A673 (cell line): ENCODE measurements at regions of chr22 and their contacts with region 1.

Region 1: DNA sequence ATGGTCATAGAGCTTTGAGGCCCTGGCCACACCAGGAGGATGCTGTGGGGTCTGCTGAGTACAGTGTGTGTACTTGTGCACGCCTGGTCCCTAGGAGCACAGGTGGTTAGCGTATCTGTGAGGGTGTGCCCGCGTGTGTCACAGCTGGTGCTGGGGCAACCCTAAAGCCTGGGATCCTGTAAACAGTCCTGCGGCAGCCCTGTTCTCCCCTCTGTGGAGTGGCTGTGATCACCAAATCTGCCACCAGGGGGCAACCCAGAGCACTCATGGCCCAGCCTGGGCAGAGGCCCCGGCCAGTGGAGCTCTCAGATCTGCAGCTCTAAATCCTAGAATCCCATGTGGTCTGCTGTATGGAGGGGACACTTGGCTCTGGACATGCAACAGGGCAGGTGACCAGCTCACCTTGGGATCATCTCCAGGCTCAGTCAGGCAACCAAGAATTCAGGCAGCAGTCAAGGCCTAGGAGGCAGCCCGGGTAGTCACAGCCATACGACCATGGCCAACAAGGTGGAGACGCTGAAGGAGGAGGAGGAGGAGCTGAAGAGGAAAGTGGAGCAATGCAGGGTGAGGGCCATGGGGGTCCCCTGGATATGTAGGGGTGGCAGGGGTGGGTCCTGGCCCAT is 3.9 kb downstream of the SH3BP1 start:
- DNase-seq: peak; percentile 86
- H3K4me3 ChIP-seq: no peak overlapping the region
- H3K27ac ChIP-seq: no peak overlapping the region
- H3K4me1 ChIP-seq: peaks cover 26% of the 10 kb centered on the region
- H3K27me3 ChIP-seq: no peaks in the 10 kb centered on the region
- CTCF ChIP-seq: peak; percentile 93

Region 2: DNA sequence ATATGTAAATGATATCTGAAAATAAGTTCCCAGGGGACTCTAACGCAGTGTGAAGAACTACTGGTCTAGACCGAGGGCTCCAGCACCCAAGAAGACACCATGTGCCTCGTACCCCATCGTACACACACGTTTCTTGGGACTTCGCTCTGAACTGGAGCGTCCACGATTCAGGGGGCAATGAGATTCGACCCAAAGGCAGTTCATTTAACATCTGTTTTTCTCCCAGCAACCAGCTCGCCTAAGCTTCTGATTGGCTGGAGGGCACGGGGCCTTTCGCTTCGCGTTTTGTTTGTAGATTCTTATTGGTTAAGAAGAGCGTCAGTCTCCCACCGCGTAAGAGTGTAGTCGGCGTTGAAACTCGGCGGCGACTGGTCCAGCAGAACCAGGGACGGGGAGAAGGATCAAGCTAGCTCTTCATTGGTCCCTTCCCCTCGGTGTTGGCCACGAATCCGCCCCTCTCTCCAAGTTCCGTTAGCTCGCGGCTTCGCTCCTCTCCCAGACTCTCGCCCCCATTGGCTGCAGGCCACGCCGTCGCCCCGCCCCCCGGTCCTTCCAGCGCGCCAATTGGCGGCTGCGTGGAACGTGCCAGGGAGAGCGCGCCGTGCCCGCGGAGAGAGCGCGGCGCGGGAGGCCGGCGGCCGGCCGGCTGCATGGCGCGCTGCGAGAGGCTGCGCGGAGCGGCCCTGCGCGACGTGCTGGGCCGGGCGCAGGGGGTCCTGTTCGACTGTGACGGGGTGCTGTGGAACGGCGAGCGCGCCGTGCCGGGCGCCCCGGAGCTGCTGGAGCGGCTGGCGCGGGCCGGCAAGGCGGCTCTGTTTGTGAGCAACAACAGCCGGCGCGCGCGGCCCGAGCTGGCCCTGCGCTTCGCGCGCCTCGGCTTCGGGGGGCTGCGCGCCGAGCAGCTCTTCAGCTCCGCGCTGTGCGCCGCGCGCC is 15.1 kb after region 1 on chr22 and contains the start of gene PDXP:
- CTCF ChIA-PET with region 1: interaction called, 39 read pairs
- POLR2A ChIA-PET with region 1: interaction called, 9 read pairs
- intact Hi-C with region 1: no loop called
- DNase-seq: peak; percentile 100
- H3K4me3 ChIP-seq: peak within 1 kb of the TSS; percentile 85
- H3K27ac ChIP-seq: peak within 1 kb of the TSS; percentile 51
- H3K4me1 ChIP-seq: peaks cover 21% of the 10 kb centered on the region
- H3K27me3 ChIP-seq: no peaks in the 10 kb centered on the region
- CTCF ChIP-seq: no peak
- total RNA-seq, gene PDXP: 57.3 and 63.5 TPM in 2 replicates

Region 3: GRCh38 chr22:37676736-37677492 is 33.6 kb after region 1 on chr22:
- CTCF ChIA-PET with region 1: interaction called, 45 read pairs
- POLR2A ChIA-PET with region 1: interaction called, 8 read pairs
- intact Hi-C with region 1: loop called (anchors 5 kb)
- DNase-seq: peak; percentile 95
- H3K4me3 ChIP-seq: peak overlapping the region; percentile 59
- H3K27ac ChIP-seq: peak overlapping the region; percentile 92
- H3K4me1 ChIP-seq: peaks cover 24% of the 10 kb centered on the region
- H3K27me3 ChIP-seq: no peaks in the 10 kb centered on the region
- CTCF ChIP-seq: no peak

Region 4: DNA sequence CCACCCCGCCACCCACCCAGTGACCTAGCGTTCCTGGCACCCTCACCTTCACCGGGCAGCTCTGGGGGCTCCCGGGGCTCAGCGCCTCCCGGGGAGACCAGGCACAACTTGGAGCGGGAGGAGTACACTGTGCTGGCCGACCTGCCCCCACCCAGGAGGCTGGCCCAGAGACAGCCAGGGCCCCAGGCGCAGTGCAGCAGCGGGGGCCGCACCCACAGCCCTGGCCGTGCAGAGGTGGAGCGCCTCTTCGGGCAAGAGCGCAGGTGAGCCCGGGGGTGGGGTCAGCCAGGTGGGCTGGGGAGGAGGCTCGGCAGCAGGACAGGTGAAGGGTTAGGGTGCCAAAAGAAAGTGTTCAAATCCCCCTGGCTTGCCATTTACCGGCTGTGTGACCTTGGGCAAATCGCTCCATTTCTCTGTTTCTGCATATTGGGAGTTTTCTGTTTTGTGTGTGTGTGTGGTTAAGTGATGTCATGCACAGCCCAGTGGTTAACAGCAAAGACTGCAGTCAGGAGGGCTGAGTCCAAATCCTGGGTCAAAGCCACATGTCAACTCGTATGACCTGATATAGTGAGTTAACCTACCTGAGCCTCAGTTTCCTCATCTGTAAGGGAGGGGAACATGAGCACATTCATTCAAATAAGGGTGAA is 83.0 kb after region 1 on chr22:
- CTCF ChIA-PET with region 1: interaction called, 10 read pairs
- POLR2A ChIA-PET with region 1: no interaction called
- intact Hi-C with region 1: no loop called
- DNase-seq: no peak
- H3K4me3 ChIP-seq: no peak overlapping the region
- H3K27ac ChIP-seq: no peak overlapping the region
- H3K4me1 ChIP-seq: peaks cover 11% of the 10 kb centered on the region
- H3K27me3 ChIP-seq: no peaks in the 10 kb centered on the region
- CTCF ChIP-seq: 0 out of 2 replicates have a peak, but pooled peaks have one; percentile 15

Region 5: DNA sequence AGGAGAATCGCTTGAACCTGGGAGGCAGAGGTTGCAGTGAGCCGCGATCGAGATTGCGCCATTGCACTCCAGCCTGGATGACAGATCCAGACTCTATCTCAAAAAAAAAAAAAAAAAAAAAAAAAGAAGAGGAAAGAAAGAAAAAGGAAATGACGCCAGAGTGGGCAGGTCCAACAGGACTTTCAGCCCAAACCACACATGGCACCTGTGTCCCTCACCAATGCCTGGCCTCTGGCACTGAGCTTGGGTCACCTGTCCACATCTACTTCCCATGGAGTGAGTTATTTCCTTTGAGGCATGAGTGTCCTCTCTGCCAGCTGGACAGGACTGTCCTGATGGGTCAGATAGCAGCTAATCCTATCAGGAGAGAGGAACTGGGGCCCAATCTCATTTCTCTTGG is 149.2 kb after region 1 on chr22:
- CTCF ChIA-PET with region 1: interaction called, 9 read pairs
- POLR2A ChIA-PET with region 1: no interaction called
- intact Hi-C with region 1: loop called (anchors 1 kb)
- DNase-seq: no peak
- H3K4me3 ChIP-seq: no peak overlapping the region
- H3K27ac ChIP-seq: no peak overlapping the region
- H3K4me1 ChIP-seq: no peaks in the 10 kb centered on the region
- H3K27me3 ChIP-seq: no peaks in the 10 kb centered on the region
- CTCF ChIP-seq: no peak